CD4-positive, alpha-beta memory T cell (primary cell): ENCODE measurements at regions of chr1 and their contacts with region 1.

Region 1: DNA sequence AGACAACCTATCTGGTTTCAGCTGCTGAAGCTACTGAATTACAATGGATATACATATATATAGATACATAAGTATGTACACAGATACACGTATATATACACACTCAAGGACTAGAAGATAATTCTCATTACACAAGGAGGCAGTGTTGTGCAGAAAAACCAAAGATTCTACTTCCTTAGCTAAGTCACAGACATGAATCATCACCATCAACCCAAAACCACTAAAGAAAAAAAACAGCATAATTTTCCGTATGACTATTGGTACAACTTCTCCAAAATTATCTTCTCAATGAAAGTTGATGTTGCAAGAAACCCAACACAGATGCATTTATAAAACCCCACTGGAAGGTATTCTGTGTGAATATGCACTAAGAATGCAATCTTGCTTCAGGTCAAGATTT is 36.8 kb upstream of the RPF1 start:
- DNase-seq: peak; percentile 47 to 78 (median 72)
- H3K4me3 ChIP-seq: no peak overlapping the region
- H3K4me3 Mint-ChIP-seq: peak overlapping the region in 6 of 8 donors; percentile 37 to 68 (median 48)
- H3K27ac ChIP-seq: no peak overlapping the region
- H3K27ac Mint-ChIP-seq: peak overlapping the region in 6 of 7 donors; percentile 10 to 87 (median 62)
- H3K4me1 ChIP-seq: peaks cover 15% of the 10 kb centered on the region
- H3K4me1 Mint-ChIP-seq: peaks cover 12 to 22% (median 17%) of the 10 kb centered on the region in 4 donors
- H3K27me3 ChIP-seq: no peaks in the 10 kb centered on the region
- H3K27me3 Mint-ChIP-seq: peaks cover 4 to 9% of the 10 kb centered on the region in 2 donors

Region 2: DNA sequence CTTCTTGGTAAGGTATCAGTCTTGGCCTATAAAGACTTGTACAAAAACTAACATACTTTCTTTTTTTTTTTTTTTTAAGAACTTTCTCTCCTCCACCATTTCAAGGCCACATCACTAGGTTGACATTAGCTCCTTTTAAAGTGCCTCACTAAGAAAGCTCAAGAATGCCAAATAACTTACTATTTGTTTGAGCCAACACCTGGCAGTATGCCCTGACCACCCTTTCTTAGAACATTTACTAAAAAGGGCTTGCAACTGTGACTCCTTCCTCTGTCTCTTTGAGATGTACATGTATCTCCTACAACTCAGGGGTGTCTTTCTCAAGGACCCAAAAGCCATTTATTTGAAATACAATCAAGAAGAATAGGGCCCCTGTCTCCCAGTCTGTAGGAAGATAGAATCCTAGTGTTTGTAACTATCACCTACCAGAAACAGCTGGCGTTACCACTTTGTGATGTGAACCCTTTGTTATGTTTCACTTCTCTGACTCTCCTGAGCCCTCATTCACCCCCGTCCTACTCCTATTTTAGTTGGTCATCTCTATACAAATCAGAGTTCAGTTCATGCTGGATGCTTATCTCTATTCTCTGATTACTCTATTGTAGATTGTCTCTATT is 153.0 kb before region 1 on chr1:
- CTCF ChIA-PET with region 1: no interaction called
- POLR2A ChIA-PET with region 1: no interaction called
- intact Hi-C with region 1: no loop called
- DNase-seq: no peak
- H3K4me3 ChIP-seq: no peak overlapping the region
- H3K4me3 Mint-ChIP-seq: no peak overlapping the region
- H3K27ac ChIP-seq: no peak overlapping the region
- H3K27ac Mint-ChIP-seq: no peak overlapping the region
- H3K4me1 ChIP-seq: no peaks in the 10 kb centered on the region
- H3K4me1 Mint-ChIP-seq: no peaks in the 10 kb centered on the region
- H3K27me3 ChIP-seq: no peaks in the 10 kb centered on the region
- H3K27me3 Mint-ChIP-seq: peaks cover 21% of the 10 kb centered on the region in 2 donors

Region 3: GRCh38 chr1:84478876-84479868 is 36.9 kb after region 1 on chr1 and contains the start of gene RPF1:
- CTCF ChIA-PET with region 1: interaction called, 24 read pairs
- POLR2A ChIA-PET with region 1: interaction called, 17 read pairs
- intact Hi-C with region 1: loop called (anchors 1 kb)
- DNase-seq: peak; percentile 83 to 86 (median 85)
- H3K4me3 ChIP-seq: peak within 1 kb of the TSS; percentile 93
- H3K4me3 Mint-ChIP-seq: peak within 1 kb of the TSS; percentile 96 to 100 (median 99)
- H3K27ac ChIP-seq: peak within 1 kb of the TSS; percentile 65
- H3K27ac Mint-ChIP-seq: peak within 1 kb of the TSS; percentile 96 to 99 (median 98)
- H3K4me1 ChIP-seq: peaks cover 41% of the 10 kb centered on the region
- H3K4me1 Mint-ChIP-seq: peaks cover 31 to 54% (median 41%) of the 10 kb centered on the region in 4 donors
- H3K27me3 ChIP-seq: no peaks in the 10 kb centered on the region
- H3K27me3 Mint-ChIP-seq: peaks cover 13 to 21% of the 10 kb centered on the region in 2 donors
- total RNA-seq, gene RPF1: 41.7 to 46.2 TPM

Region 4: GRCh38 chr1:84541679-84542078 is 99.4 kb after region 1 on chr1:
- CTCF ChIA-PET with region 1: interaction called, 8 read pairs
- POLR2A ChIA-PET with region 1: no interaction called
- intact Hi-C with region 1: loop called (anchors 1 kb)
- DNase-seq: no peak
- H3K4me3 ChIP-seq: no peak overlapping the region
- H3K4me3 Mint-ChIP-seq: no peak overlapping the region
- H3K27ac ChIP-seq: no peak overlapping the region
- H3K27ac Mint-ChIP-seq: no peak overlapping the region
- H3K4me1 ChIP-seq: no peaks in the 10 kb centered on the region
- H3K4me1 Mint-ChIP-seq: peaks cover 0 to 7% (median 3%) of the 10 kb centered on the region in 4 donors
- H3K27me3 ChIP-seq: no peaks in the 10 kb centered on the region
- H3K27me3 Mint-ChIP-seq: no peaks in the 10 kb centered on the region

Region 5: DNA sequence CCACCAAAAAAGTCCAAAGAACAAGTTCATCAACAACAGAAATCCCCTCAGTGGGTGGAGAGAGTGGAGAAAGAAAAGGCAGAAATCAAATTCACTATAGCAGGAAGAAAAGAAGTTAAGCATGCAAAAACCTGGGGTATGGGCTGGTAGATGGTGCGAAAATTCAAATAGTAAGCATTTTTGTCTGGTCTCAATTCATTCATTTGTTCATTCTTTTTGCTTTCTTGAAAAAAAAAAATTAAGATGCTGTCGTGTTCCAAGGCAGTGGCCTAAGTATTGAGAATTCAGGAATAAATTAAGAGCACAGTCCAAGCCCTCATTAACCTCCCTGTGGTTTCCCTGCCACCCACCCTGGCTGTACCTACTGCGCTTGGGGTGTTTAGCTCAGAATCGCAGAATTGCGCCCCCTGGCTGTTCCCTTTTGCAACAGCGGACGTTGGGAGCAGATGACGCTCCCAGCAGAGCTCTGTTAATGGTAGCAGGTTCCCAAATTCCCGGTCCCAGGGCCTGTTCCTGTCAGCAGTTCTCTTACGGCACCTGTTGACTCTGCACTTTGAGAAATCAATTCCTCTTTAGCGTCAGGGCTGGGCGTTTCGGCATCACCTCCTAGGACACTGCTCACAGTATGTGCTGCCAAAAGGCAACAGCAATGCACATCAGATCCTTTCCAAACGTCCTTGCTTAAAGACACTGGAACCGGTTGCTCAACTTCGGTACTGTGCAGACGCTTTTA is 282.0 kb after region 1 on chr1:
- CTCF ChIA-PET with region 1: interaction called, 5 read pairs
- POLR2A ChIA-PET with region 1: no interaction called
- intact Hi-C with region 1: loop called (anchors 1 kb)
- DNase-seq: peak; percentile 22 to 46 (median 40)
- H3K4me3 ChIP-seq: no peak overlapping the region
- H3K4me3 Mint-ChIP-seq: no peak overlapping the region
- H3K27ac ChIP-seq: no peak overlapping the region
- H3K27ac Mint-ChIP-seq: peak overlapping the region in 1 of 7 donors; percentile 54
- H3K4me1 ChIP-seq: no peaks in the 10 kb centered on the region
- H3K4me1 Mint-ChIP-seq: peaks cover 0 to 1% (median 0%) of the 10 kb centered on the region in 4 donors
- H3K27me3 ChIP-seq: no peaks in the 10 kb centered on the region
- H3K27me3 Mint-ChIP-seq: peaks cover 0 to 5% of the 10 kb centered on the region in 2 donors

Region 6: GRCh38 chr1:84936116-84936810 is 494.0 kb after region 1 on chr1:
- CTCF ChIA-PET with region 1: interaction called, 7 read pairs
- POLR2A ChIA-PET with region 1: no interaction called
- intact Hi-C with region 1: loop called (anchors 1 kb)
- DNase-seq: peak in 4 of 5 donors; percentile 52 to 62 (median 60)
- H3K4me3 ChIP-seq: no peak overlapping the region
- H3K4me3 Mint-ChIP-seq: no peak overlapping the region
- H3K27ac ChIP-seq: no peak overlapping the region
- H3K27ac Mint-ChIP-seq: no peak overlapping the region
- H3K4me1 ChIP-seq: peaks cover 3% of the 10 kb centered on the region
- H3K4me1 Mint-ChIP-seq: peaks cover 0 to 5% (median 2%) of the 10 kb centered on the region in 4 donors
- H3K27me3 ChIP-seq: no peaks in the 10 kb centered on the region
- H3K27me3 Mint-ChIP-seq: no peaks in the 10 kb centered on the region

Region 7: DNA sequence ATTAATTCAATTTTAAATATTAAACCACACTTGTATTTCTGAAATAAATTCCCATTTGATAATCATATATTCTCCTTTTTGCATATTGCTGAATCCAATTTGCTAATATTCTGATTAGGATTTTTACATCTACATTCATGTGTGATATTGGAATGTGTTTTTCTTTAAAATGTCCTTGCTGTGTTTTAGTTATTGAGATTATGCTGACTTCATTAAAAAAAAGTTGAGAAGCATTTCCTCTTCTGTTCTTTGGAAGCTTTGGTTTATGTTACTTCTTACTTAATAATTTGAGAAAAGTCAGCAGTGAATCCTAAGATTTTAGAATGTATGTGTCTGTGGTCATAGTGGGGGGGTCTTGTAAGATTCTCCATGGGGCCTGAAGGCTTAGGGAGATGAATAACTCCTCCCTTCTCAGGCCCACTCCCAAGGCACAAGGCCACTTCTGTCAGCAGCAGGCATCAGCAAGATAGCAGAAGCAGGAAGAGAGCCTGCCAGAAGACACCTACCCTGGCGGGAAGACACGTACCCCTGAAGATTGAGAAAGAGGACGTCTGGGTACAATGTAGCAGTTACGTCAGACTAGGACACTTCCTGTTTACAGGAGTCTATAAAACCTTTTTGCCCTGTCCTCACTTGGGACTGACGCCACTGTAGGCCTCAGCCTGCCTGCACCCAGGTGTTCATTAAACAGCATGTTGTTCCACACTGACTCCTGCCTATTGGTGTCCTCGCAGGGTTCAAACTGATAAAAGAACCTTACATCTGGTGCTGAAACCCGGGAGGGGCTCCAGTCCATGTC is 1897.0 kb after region 1 on chr1:
- CTCF ChIA-PET with region 1: no interaction called
- POLR2A ChIA-PET with region 1: no interaction called
- intact Hi-C with region 1: no loop called
- DNase-seq: peak in 1 of 5 donors; percentile 4
- H3K4me3 ChIP-seq: no peak overlapping the region
- H3K4me3 Mint-ChIP-seq: no peak overlapping the region
- H3K27ac ChIP-seq: no peak overlapping the region
- H3K27ac Mint-ChIP-seq: peak overlapping the region in 1 of 7 donors; percentile 21
- H3K4me1 ChIP-seq: no peaks in the 10 kb centered on the region
- H3K4me1 Mint-ChIP-seq: peaks cover 0 to 2% (median 0%) of the 10 kb centered on the region in 4 donors
- H3K27me3 ChIP-seq: no peaks in the 10 kb centered on the region
- H3K27me3 Mint-ChIP-seq: no peaks in the 10 kb centered on the region